Gastrocnemius medialis (tissue), 4 donors: ENCODE measurements at regions of chr6 and their contacts with region 1.

Region 1: GRCh38 chr6:127737009-127737486 is 160.1 kb downstream of the C6orf58 start:
- DNase-seq: peak; percentile 2 to 17
- ATAC-seq: peak; percentile 74 to 83
- H3K4me3 ChIP-seq: no peak overlapping the region
- H3K27ac ChIP-seq: no peak overlapping the region
- H3K4me1 ChIP-seq: no peaks in the 10 kb centered on the region
- H3K27me3 ChIP-seq: no peaks in the 10 kb centered on the region
- CTCF ChIP-seq: peak; percentile 27 to 64 (median 41)
- POLR2A ChIP-seq: no peak

Region 2: GRCh38 chr6:127570739-127571389 is 166.2 kb before region 1 on chr6:
- in situ Hi-C with region 1: no loop called
- intact Hi-C with region 1: no loop called
- DNase-seq: no peak
- ATAC-seq: no peak
- H3K4me3 ChIP-seq: no peak overlapping the region
- H3K27ac ChIP-seq: no peak overlapping the region
- H3K4me1 ChIP-seq: no peaks in the 10 kb centered on the region
- H3K27me3 ChIP-seq: no peaks in the 10 kb centered on the region
- CTCF ChIP-seq: no peak
- POLR2A ChIP-seq: no peak

Region 3: DNA sequence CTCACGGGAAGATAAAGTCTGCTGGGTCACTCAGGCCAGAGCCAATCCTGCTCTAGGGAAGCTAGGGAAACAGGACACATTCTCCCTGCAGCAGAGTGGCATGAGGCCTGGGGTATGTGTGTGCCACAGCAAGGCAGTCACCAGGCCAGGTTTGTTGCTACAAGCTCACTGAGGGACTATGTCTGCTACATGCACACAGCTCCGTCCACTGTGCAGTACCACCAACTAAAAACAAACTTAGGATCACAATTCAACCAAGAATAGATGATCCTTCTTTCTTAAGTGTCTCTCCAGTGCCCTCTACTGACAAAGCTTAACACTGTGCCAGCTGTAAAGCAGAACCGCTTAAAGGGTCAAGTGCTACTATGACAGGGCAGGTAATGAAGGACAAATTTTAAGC is 590.8 kb after region 1 on chr6:
- in situ Hi-C with region 1: loop called in 1 of 4 experiments (anchors 25 kb)
- intact Hi-C with region 1: no loop called
- DNase-seq: no peak
- ATAC-seq: peak in 1 of 2 donors; percentile 55
- H3K4me3 ChIP-seq: no peak overlapping the region
- H3K27ac ChIP-seq: no peak overlapping the region
- H3K4me1 ChIP-seq: peaks cover 0 to 8% of the 10 kb centered on the region in 2 donors
- H3K27me3 ChIP-seq: no peaks in the 10 kb centered on the region
- CTCF ChIP-seq: peak in 2 of 5 experiments; percentile 29 to 40
- POLR2A ChIP-seq: no peak

Region 4: GRCh38 chr6:128731249-128732165 is 994.5 kb after region 1 on chr6:
- in situ Hi-C with region 1: no loop called
- intact Hi-C with region 1: loop called (anchors 2 kb)
- DNase-seq: no peak
- ATAC-seq: peak; percentile 52 to 58
- H3K4me3 ChIP-seq: no peak overlapping the region
- H3K27ac ChIP-seq: peak overlapping the region in 1 of 4 donors; percentile 34
- H3K4me1 ChIP-seq: no peaks in the 10 kb centered on the region
- H3K27me3 ChIP-seq: no peaks in the 10 kb centered on the region
- CTCF ChIP-seq: peak in 2 of 5 experiments; percentile 34 to 44
- POLR2A ChIP-seq: no peak

Region 5: GRCh38 chr6:129236001-129236517 is 1499.0 kb after region 1 on chr6:
- in situ Hi-C with region 1: loop called in 1 of 4 experiments (anchors 25 kb)
- intact Hi-C with region 1: no loop called
- DNase-seq: no peak
- ATAC-seq: no peak
- H3K4me3 ChIP-seq: no peak overlapping the region
- H3K27ac ChIP-seq: no peak overlapping the region
- H3K4me1 ChIP-seq: peaks cover 0 to 5% of the 10 kb centered on the region in 2 donors
- H3K27me3 ChIP-seq: no peaks in the 10 kb centered on the region
- CTCF ChIP-seq: no peak
- POLR2A ChIP-seq: no peak